ENCODE measurements at regions of chr19 and their contacts with region 1.

Region 1: GRCh38 chr19:51020988-51021651 is 1.6 kb upstream of the KLK10 start:
- DNase-seq: no peak
- H3K4me3 ChIP-seq: no peak overlapping the region
- H3K27ac ChIP-seq: no peak overlapping the region
- H3K4me1 ChIP-seq: peaks cover 0 to 26% (median 18%) of the 10 kb centered on the region in 4 donors
- H3K27me3 ChIP-seq: peaks cover 17 to 87% (median 60%) of the 10 kb centered on the region in 3 donors
- CTCF ChIP-seq: peak in 3 of 4 experiments; percentile 24 to 56 (median 29)
- EP300 ChIP-seq: no peak
- POLR2A ChIP-seq: no peak

Region 2: GRCh38 chr19:50933640-50934039 is 87.5 kb before region 1 on chr19:
- intact Hi-C with region 1: no loop called
- DNase-seq: no peak
- H3K4me3 ChIP-seq: no peak overlapping the region
- H3K27ac ChIP-seq: no peak overlapping the region
- H3K4me1 ChIP-seq: no peaks in the 10 kb centered on the region
- H3K27me3 ChIP-seq: peaks cover 0 to 50% (median 15%) of the 10 kb centered on the region in 3 donors
- CTCF ChIP-seq: no peak
- EP300 ChIP-seq: no peak
- POLR2A ChIP-seq: no peak

Region 3: GRCh38 chr19:51097166-51097738 is 76.1 kb after region 1 on chr19:
- intact Hi-C with region 1: loop called (anchors 1 kb)
- DNase-seq: peak; percentile 74
- H3K4me3 ChIP-seq: no peak overlapping the region
- H3K27ac ChIP-seq: no peak overlapping the region
- H3K4me1 ChIP-seq: peaks cover 0 to 29% (median 26%) of the 10 kb centered on the region in 4 donors
- H3K27me3 ChIP-seq: no peaks in the 10 kb centered on the region
- CTCF ChIP-seq: peak in 3 of 4 experiments; percentile 23 to 63 (median 43)
- EP300 ChIP-seq: no peak
- POLR2A ChIP-seq: no peak

Region 4: DNA sequence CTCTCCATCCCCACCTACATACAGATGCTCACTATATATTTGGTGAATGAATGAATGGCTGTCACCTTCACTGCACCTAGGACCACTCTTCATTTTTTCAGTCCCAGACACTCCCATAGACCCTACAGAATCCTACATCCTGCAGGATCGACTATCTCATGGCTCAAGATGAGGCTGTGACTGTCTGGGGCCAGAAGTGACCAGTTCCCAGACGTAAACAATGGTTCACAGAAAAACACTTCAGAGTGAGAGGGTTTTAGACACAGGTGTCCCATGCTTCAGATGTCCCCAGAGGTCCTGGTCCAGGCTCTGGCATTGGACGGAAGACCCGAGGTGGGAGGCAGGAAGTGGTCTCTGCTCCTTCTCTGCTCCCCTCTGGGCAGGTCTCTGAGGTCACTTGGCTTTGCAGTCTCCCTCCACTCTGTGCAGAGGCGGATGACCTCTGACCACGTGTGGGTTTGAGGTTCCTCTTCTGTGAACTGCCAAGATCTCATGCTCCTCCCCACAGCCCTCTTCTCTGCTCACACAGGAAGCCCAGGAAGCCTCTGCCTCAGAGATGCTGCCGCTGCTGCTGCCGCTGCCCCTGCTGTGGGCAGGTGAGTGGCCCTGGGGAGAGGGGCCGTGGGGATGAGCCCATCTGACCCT is 145.8 kb after region 1 on chr19:
- intact Hi-C with region 1: loop called (anchors 5 kb)
- DNase-seq: no peak
- H3K4me3 ChIP-seq: no peak overlapping the region
- H3K27ac ChIP-seq: no peak overlapping the region
- H3K4me1 ChIP-seq: peaks cover 0 to 7% (median 0%) of the 10 kb centered on the region in 4 donors
- H3K27me3 ChIP-seq: peaks cover 0 to 14% (median 0%) of the 10 kb centered on the region in 3 donors
- CTCF ChIP-seq: no peak
- EP300 ChIP-seq: no peak
- POLR2A ChIP-seq: no peak